WTC11 (cell line): ENCODE measurements at regions of chr7 and their contacts with region 1.

Region 1: DNA sequence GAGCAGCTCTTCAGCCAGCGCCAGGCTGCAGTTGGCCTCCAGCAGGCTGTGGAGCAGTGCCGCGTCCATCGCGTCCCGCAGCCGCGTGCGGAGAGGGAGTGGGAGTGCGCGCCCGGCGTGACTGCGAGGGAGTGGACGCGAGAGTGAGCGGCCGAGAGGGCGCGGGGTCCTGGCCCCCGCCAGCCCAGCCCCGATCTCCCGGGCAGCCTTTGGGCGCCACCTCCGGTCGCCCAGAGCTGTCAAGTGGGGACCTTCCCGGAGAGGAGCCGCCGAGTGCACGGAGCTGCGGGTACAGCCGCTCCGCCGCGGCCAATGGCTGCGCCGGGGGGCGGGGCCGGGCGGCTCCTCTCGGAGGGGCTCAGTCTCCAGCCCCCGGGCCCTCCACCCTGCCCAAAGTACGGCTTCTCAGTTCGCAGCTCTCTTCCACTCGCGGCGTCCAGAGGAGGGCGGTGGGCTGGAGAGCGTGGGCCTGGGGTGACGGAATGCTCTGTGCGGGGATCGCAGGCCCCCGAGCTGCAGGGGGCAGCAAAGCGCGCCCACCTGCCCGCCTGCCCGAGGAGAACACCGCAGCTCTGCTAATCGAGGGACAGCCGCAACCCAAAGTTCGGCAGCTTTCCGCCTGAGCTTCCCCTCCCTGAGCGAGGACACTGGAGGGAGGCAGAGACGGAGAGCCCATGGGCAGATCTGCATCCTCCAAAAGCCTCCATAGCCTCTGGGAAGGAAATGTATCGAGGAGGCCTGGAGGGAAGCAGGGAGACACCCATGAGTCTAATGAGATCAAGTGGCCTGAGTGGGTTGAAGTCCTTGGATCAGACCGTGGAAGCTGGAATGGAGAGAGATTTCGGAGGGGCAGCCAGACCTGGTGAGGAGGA is at the start of gene CRHR2:
- DNase-seq: peak; percentile 63
- ATAC-seq: peak; percentile 74
- H3K4me3 Mint-ChIP-seq: peak within 1 kb of the TSS; percentile 79
- H3K27ac Mint-ChIP-seq: no peak within 1 kb of the TSS
- H3K4me1 Mint-ChIP-seq: peaks cover 46% of the 10 kb centered on the region
- H3K27me3 Mint-ChIP-seq: peaks cover 70% of the 10 kb centered on the region
- CTCF ChIP-seq: no peak
- total RNA-seq, gene CRHR2: 0.09 to 0.25 TPM (median 0.22 TPM) in 3 replicates

Region 2: DNA sequence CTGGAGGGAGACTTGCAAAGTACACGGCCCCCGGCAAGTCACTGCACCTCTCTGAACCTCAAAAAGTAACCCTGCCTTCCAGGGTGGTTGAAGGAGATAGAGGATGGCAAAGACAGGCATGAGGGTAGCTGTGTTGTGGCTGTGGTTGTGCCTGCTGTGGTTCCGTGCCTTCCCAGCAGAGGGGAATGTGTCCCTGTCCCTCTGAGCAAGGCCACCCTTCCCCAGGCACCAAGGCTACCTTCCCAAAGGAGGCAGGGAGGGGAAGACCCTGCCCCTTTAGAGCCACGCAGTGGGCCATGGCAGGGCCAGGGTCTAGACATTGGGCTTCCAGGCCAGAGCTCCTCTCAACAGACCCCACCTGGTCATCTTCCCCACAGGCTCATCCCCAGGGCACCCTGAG is 19.1 kb before region 1 on chr7:
- CTCF ChIA-PET with region 1: interaction called, 10 read pairs
- POLR2A ChIA-PET with region 1: interaction called, 3 read pairs
- DNase-seq: no peak
- ATAC-seq: peak; percentile 37; the same call in 1 of the 2 replicates
- H3K4me3 Mint-ChIP-seq: no peak overlapping the region
- H3K27ac Mint-ChIP-seq: no peak overlapping the region
- H3K4me1 Mint-ChIP-seq: peaks cover 5% of the 10 kb centered on the region; the same call in 1 of the 2 replicates
- H3K27me3 Mint-ChIP-seq: no peaks in the 10 kb centered on the region
- CTCF ChIP-seq: no peak

Region 3: GRCh38 chr7:30694218-30694745 is 11.8 kb after region 1 on chr7:
- CTCF ChIA-PET with region 1: interaction called, 57 read pairs
- POLR2A ChIA-PET with region 1: interaction called, 5 read pairs
- DNase-seq: no peak
- ATAC-seq: peak; percentile 37
- H3K4me3 Mint-ChIP-seq: no peak overlapping the region
- H3K27ac Mint-ChIP-seq: no peak overlapping the region
- H3K4me1 Mint-ChIP-seq: peaks cover 19% of the 10 kb centered on the region
- H3K27me3 Mint-ChIP-seq: no peaks in the 10 kb centered on the region
- CTCF ChIP-seq: no peak

Region 4: GRCh38 chr7:30717181-30717580 is 34.7 kb after region 1 on chr7:
- CTCF ChIA-PET with region 1: interaction called, 16 read pairs
- POLR2A ChIA-PET with region 1: no interaction called
- DNase-seq: peak; percentile 36
- ATAC-seq: peak; percentile 97
- H3K4me3 Mint-ChIP-seq: no peak overlapping the region
- H3K27ac Mint-ChIP-seq: no peak overlapping the region
- H3K4me1 Mint-ChIP-seq: peaks cover 2% of the 10 kb centered on the region; the same call in 1 of the 2 replicates
- H3K27me3 Mint-ChIP-seq: peaks cover 47% of the 10 kb centered on the region
- CTCF ChIP-seq: no peak

Region 5: DNA sequence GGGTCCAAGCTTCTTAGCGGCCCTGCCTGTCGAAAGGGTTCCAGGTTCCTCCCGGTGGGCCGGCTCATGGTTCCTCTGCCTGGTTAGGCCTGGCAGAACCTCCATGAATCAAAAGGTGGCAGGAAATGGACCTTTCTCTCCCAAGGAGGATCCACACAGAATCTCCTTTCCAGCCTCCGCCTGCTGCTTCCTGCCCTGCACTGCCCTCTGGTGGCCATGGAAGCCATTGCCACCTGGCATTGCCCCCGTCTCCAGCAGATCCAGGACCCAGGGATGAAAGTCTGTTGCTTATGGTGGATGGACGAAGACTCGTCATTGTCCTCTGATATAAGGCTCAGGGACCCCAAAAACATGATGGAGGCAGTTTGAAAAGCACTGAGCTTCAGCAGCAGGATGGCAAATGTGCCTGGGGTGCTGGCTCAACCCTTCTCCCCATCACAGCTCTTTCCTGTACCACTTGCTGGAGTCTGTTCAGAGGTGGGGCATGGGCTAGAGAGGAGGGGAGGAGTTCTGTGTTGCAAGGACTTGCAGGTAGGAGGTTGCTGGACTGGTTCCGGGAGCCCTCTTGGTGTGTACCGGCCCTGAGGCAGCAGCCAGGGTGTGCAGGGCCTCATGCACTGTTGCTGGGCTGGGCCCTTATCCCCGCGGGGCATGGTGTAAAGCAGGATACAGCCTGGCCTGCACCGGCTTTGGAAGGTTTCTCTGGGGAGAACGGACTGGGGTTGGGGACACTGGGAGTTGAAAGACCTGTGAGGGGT is 58.2 kb after region 1 on chr7:
- CTCF ChIA-PET with region 1: interaction called, 36 read pairs
- POLR2A ChIA-PET with region 1: no interaction called
- DNase-seq: peak; percentile 88
- ATAC-seq: peak; percentile 86
- H3K4me3 Mint-ChIP-seq: no peak overlapping the region
- H3K27ac Mint-ChIP-seq: no peak overlapping the region
- H3K4me1 Mint-ChIP-seq: no peaks in the 10 kb centered on the region
- H3K27me3 Mint-ChIP-seq: no peaks in the 10 kb centered on the region; the same call in 1 of the 2 replicates
- CTCF ChIP-seq: peak; percentile 97

Region 6: GRCh38 chr7:30931161-30931928 is 248.9 kb after region 1 on chr7:
- CTCF ChIA-PET with region 1: no interaction called
- POLR2A ChIA-PET with region 1: no interaction called
- DNase-seq: no peak
- ATAC-seq: no peak; the same call in 1 of the 2 replicates
- H3K4me3 Mint-ChIP-seq: no peak overlapping the region
- H3K27ac Mint-ChIP-seq: no peak overlapping the region
- H3K4me1 Mint-ChIP-seq: 0 out of 2 replicates have a peak, but pooled peaks cover 4% of the 10 kb centered on the region
- H3K27me3 Mint-ChIP-seq: peaks cover 9% of the 10 kb centered on the region
- CTCF ChIP-seq: no peak